Mammary epithelial cell (primary cell): ENCODE measurements at regions of chr13 and their contacts with region 1.

Region 1: DNA sequence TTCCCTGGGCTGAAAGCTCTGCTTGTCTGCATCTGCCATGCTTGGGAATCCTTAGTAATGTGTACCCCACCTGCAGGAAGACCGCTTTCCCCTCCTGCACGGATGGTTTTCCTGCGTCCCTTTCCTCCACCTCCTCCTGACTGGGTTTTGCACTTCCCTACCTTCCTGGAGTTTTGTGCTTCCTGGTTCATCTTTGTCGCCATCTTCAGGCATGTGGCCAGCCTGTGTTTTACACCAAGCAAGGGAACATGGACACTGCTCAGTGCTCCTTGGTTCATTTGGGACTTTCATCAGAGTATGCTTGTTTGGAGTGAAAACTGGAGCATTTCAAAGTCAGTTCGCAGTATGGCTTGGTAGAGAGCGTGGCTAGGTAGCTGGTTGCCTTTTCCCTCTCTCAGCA is 30.7 kb downstream of the ERICH6B start:
- DNase-seq: peak; percentile 15
- H3K4me3 ChIP-seq: no peak overlapping the region
- H3K27ac ChIP-seq: no peak overlapping the region
- H3K4me1 ChIP-seq: no peaks in the 10 kb centered on the region
- H3K27me3 ChIP-seq: no peaks in the 10 kb centered on the region
- CTCF ChIP-seq: peak; percentile 47 to 60

Region 2: GRCh38 chr13:45511310-45512097 is 73.3 kb before region 1 on chr13:
- CTCF ChIA-PET with region 1: no interaction called
- dilution Hi-C with region 1: no loop called
- in situ Hi-C with region 1: no loop called
- intact Hi-C with region 1: loop called (anchors 1 kb)
- DNase-seq: peak; percentile 69
- H3K4me3 ChIP-seq: no peak overlapping the region
- H3K27ac ChIP-seq: peak overlapping the region; percentile 90
- H3K4me1 ChIP-seq: peaks cover 13% of the 10 kb centered on the region
- H3K27me3 ChIP-seq: no peaks in the 10 kb centered on the region
- CTCF ChIP-seq: peak; percentile 75 to 85

Region 3: DNA sequence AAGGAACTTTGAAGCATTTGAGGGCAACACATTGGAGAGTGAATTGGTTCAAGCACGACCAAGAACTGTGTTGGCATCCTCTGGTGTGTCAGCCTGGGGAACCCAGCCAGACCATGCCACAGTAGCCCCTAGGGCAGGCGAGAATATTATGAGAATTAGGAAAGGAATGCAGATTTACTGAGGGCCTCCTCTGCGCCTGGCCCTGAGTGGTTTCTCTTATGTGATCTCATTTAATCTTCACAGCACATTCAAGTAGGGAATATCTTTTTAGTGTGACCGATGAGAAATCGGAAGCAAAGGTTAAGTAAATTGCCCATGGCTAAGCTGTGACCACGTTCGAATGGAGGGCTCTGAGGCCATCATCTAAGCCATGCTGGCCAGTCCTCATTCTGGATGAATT is 46.0 kb after region 1 on chr13:
- CTCF ChIA-PET with region 1: no interaction called
- dilution Hi-C with region 1: no loop called
- in situ Hi-C with region 1: no loop called
- intact Hi-C with region 1: no loop called
- DNase-seq: peak; percentile 53
- H3K4me3 ChIP-seq: no peak overlapping the region
- H3K27ac ChIP-seq: no peak overlapping the region
- H3K4me1 ChIP-seq: peaks cover 9% of the 10 kb centered on the region
- H3K27me3 ChIP-seq: no peaks in the 10 kb centered on the region
- CTCF ChIP-seq: no peak